CD14-positive monocyte (primary cell): ENCODE measurements at regions of chr12 and their contacts with region 1.

Region 1: DNA sequence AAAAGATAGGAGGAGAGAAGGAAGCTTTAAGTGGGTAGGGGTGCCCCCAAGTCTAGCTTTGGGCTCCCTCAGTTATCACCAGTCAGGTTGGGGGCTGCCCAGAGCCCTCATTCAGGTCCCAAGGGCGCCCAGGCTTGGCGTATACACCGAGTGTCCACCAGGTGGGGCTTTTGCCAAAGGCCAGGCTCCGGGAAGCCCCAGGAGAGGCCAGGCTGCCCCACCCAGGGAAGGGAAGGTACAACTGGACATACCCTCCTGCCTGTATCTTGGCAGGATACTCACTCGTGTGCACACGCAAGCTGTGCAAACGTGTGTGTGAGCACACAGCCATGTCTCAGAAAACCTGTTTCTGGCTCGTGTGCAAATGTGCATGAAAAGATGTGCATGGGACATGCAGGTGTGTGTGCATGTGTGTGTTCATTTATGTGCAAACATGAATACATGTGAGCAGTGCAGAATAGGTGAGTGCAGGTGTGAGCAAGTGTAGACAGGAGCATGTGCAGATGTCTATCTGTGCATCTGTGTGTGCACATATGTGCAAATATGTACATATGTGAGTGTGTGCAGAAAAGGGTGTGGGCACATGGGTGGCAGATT is 103.9 kb upstream of the MYL2 start:
- DNase-seq: peak; percentile 19 to 64 (median 46)
- H3K4me3 ChIP-seq: no peak overlapping the region
- H3K4me3 Mint-ChIP-seq: no peak overlapping the region
- H3K27ac ChIP-seq: no peak overlapping the region
- H3K27ac Mint-ChIP-seq: peak overlapping the region in 1 of 7 donors; percentile 2
- H3K4me1 ChIP-seq: no peaks in the 10 kb centered on the region
- H3K4me1 Mint-ChIP-seq: peaks cover 4% of the 10 kb centered on the region
- H3K27me3 ChIP-seq: peaks cover 0 to 3% of the 10 kb centered on the region in 2 donors
- H3K27me3 Mint-ChIP-seq: peaks cover 10 to 40% (median 11%) of the 10 kb centered on the region in 3 donors
- CTCF ChIP-seq: peak; percentile 90

Region 2: DNA sequence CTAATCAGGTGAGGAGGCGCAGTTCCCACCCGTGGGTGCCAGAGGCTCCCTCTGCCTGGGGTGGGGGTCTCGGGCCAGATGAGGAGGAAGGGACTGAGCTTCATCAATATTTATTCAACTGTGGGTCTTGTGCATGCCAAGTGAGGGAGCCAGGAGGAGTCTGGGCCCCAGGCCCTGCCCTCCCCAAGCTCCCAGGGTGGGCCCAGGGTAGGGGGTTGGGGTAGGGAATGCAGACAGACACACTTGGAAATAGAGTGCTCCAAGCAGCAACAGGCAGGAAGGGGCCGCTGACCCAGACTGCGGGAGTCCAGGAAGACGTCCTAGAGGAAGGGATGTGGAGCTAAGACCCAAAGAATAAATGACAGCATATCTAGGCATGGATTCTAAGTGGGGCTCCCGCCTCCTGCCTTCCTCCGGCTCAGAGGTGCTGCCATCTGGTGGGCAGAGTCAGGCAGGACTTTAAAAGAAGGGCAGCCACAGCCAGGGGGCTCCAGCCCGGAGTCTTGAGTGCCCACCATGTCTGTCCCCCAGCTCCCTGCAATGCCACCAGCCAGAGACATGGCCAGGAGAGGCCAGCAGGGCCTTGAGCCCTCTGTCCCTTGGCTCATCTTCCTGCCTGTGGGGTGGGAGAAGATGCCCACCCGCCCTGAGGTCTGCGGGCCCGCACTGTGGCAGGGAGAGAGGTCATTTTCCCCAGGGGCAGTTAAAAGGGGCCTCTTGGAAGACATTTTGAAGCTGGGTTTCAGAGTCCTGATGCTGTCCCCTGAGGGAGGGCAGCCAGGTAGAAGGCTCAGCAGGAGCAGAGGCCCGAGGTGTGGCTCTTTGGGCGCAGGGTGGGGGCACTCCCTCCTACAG is 274.5 kb after region 1 on chr12:
- intact Hi-C with region 1: loop called (anchors 5 kb)
- DNase-seq: peak; percentile 20 to 51 (median 43)
- H3K4me3 ChIP-seq: no peak overlapping the region
- H3K4me3 Mint-ChIP-seq: no peak overlapping the region
- H3K27ac ChIP-seq: no peak overlapping the region
- H3K27ac Mint-ChIP-seq: no peak overlapping the region
- H3K4me1 ChIP-seq: no peaks in the 10 kb centered on the region
- H3K4me1 Mint-ChIP-seq: no peaks in the 10 kb centered on the region
- H3K27me3 ChIP-seq: no peaks in the 10 kb centered on the region
- H3K27me3 Mint-ChIP-seq: peaks cover 0 to 4% (median 2%) of the 10 kb centered on the region in 3 donors
- CTCF ChIP-seq: peak; percentile 96

Region 3: GRCh38 chr12:111304642-111305071 is 280.4 kb after region 1 on chr12:
- intact Hi-C with region 1: loop called (anchors 5 kb)
- DNase-seq: peak in 2 of 3 donors; percentile 20
- H3K4me3 ChIP-seq: no peak overlapping the region
- H3K4me3 Mint-ChIP-seq: no peak overlapping the region
- H3K27ac ChIP-seq: no peak overlapping the region
- H3K27ac Mint-ChIP-seq: peak overlapping the region in 1 of 7 donors; percentile 23
- H3K4me1 ChIP-seq: peaks cover 7 to 10% of the 10 kb centered on the region in 2 donors
- H3K4me1 Mint-ChIP-seq: peaks cover 8% of the 10 kb centered on the region
- H3K27me3 ChIP-seq: no peaks in the 10 kb centered on the region
- H3K27me3 Mint-ChIP-seq: peaks cover under 1 to 2% (median 2%) of the 10 kb centered on the region in 3 donors
- CTCF ChIP-seq: peak; percentile 85

Region 4: DNA sequence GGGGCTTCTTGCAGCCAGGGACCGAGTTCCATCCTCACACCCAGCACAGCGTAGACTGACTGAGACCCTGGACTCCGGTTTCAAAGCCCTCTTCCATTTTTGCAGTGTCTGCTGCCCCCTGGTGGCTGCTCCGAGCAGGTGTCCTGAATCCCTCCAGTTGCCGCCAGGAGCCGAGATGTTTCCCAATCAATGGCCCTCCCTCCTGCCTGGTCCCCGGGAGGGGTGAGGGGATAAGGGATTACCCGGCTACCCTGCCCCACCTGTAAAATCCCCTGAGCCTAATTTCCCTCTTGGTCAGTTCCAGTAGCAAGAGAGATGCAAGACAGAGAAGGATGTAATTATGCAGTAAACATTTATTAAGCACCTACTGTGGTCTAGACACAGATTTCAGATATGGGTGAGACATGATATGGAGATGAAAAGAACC is 289.5 kb after region 1 on chr12:
- intact Hi-C with region 1: loop called in 1 of 2 experiments (anchors 5 kb)
- DNase-seq: peak; percentile 65 to 82 (median 66)
- H3K4me3 ChIP-seq: no peak overlapping the region
- H3K4me3 Mint-ChIP-seq: peak overlapping the region; percentile 27 to 68
- H3K27ac ChIP-seq: no peak overlapping the region
- H3K27ac Mint-ChIP-seq: peak overlapping the region; percentile 23 to 95 (median 91)
- H3K4me1 ChIP-seq: peaks cover 46 to 53% of the 10 kb centered on the region in 2 donors
- H3K4me1 Mint-ChIP-seq: peaks cover 58% of the 10 kb centered on the region
- H3K27me3 ChIP-seq: no peaks in the 10 kb centered on the region
- H3K27me3 Mint-ChIP-seq: peaks cover 0 to 6% (median 3%) of the 10 kb centered on the region in 3 donors
- CTCF ChIP-seq: peak; percentile 99

Region 5: DNA sequence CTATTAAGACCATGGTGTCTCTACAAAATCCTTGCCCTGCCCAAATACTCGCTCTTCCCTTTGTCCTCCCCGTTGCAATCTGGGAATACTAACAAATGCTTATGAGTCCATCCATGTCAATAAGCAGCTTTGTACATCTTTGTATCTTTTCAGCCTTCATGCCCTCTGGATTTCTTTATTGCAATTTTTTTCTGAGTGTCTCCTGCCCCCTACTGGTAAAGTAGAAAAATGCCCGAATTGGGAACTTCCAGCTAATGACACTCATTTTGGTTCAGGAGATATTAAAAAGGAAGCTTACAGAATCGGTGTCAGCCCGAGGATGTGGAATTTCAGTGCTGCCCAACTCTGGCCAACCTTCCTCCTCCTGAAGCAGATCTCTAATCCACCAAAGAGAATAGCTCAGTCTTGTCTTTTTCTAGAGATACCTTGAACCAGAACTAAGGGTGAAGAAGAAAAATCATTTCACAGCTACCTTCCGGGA is 427.4 kb after region 1 on chr12:
- intact Hi-C with region 1: loop called in 1 of 2 experiments (anchors 10 kb)
- DNase-seq: peak; percentile 58 to 73 (median 69)
- H3K4me3 ChIP-seq: no peak overlapping the region
- H3K4me3 Mint-ChIP-seq: no peak overlapping the region
- H3K27ac ChIP-seq: peak overlapping the region in 1 of 2 donors; percentile 58
- H3K27ac Mint-ChIP-seq: peak overlapping the region in 6 of 7 donors; percentile 1 to 86 (median 70)
- H3K4me1 ChIP-seq: peaks cover 8 to 21% of the 10 kb centered on the region in 2 donors
- H3K4me1 Mint-ChIP-seq: peaks cover 31% of the 10 kb centered on the region
- H3K27me3 ChIP-seq: no peaks in the 10 kb centered on the region
- H3K27me3 Mint-ChIP-seq: peaks cover 0 to 3% (median 0%) of the 10 kb centered on the region in 3 donors
- CTCF ChIP-seq: peak; percentile 83